Transverse colon (tissue), 4 donors: ENCODE measurements at regions of chr10 and their contacts with region 1.

Region 1: DNA sequence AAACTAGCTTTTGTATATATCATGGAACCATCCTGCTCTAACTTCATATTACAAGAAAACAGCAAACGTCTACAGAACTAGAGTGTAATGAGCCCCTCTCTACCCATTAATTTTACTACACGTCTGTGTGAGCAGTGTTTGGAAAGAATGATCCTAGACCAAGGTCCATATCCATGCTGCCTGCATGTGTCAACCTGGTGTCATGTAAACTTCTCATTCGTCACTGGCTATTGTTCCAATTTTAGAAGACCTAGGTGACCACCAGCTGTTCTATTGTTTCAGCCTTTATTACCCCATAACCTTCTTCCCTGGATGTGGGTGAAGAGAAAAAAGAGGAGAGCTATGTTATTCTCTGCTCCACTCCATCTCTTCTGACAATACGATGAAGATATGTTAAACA is 77.1 kb downstream of the CREM start:
- DNase-seq: no peak
- H3K4me3 ChIP-seq: no peak overlapping the region
- H3K27ac ChIP-seq: no peak overlapping the region
- H3K4me1 ChIP-seq: no peaks in the 10 kb centered on the region
- H3K27me3 ChIP-seq: no peaks in the 10 kb centered on the region
- CTCF ChIP-seq: no peak
- EP300 ChIP-seq: no peak
- POLR2A ChIP-seq: no peak

Region 2: DNA sequence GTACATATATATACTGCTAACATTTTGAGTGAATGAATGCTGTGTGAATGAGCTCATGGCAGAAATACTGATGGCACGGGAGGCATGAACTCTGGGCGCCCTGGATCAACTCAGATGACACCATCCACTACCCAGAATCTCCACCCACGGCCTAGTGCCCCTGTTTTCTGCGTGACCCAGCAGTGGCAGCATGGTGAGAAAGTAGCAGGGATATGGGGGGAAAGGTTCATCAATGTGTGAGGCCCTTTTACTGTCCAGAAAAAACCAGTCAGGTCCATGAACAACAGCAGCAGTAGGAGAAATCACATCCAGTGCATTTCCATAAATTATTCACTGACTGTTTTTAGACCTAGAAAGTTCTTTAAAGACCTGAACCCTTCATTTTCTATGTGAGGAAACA is 1478.3 kb before region 1 on chr10:
- in situ Hi-C with region 1: no loop called
- intact Hi-C with region 1: loop called (anchors 5 kb)
- DNase-seq: no peak
- H3K4me3 ChIP-seq: no peak overlapping the region
- H3K27ac ChIP-seq: no peak overlapping the region
- H3K4me1 ChIP-seq: no peaks in the 10 kb centered on the region
- H3K27me3 ChIP-seq: no peaks in the 10 kb centered on the region
- CTCF ChIP-seq: no peak
- EP300 ChIP-seq: no peak
- POLR2A ChIP-seq: no peak